ENCODE measurements at regions of chr12 and their contacts with region 1.

Region 1: GRCh38 chr12:48350249-48351021 is at the start of gene ZNF641:
- DNase-seq: peak; percentile 73
- H3K4me3 Mint-ChIP-seq: peak within 1 kb of the TSS; percentile 84
- H3K27ac Mint-ChIP-seq: peak within 1 kb of the TSS; percentile 78
- H3K4me1 Mint-ChIP-seq: peaks cover 9% of the 10 kb centered on the region
- H3K27me3 Mint-ChIP-seq: no peaks in the 10 kb centered on the region
- CTCF ChIP-seq: no peak
- total RNA-seq, gene ZNF641: 9.0 and 9.3 TPM in 2 replicates

Region 2: GRCh38 chr12:47920913-47921312 is 429.5 kb before region 1 on chr12:
- CTCF ChIA-PET with region 1: no interaction called
- intact Hi-C with region 1: no loop called
- DNase-seq: no peak
- H3K4me3 Mint-ChIP-seq: no peak overlapping the region
- H3K27ac Mint-ChIP-seq: no peak overlapping the region
- H3K4me1 Mint-ChIP-seq: no peaks in the 10 kb centered on the region
- H3K27me3 Mint-ChIP-seq: peaks cover 16% of the 10 kb centered on the region
- CTCF ChIP-seq: no peak

Region 3: GRCh38 chr12:48197971-48198671 is 152.3 kb before region 1 on chr12:
- CTCF ChIA-PET with region 1: no interaction called
- intact Hi-C with region 1: loop called (anchors 10 kb)
- DNase-seq: peak; percentile 87
- H3K4me3 Mint-ChIP-seq: peak overlapping the region; percentile 73
- H3K27ac Mint-ChIP-seq: peak overlapping the region; percentile 74
- H3K4me1 Mint-ChIP-seq: peaks cover 33% of the 10 kb centered on the region
- H3K27me3 Mint-ChIP-seq: no peaks in the 10 kb centered on the region
- CTCF ChIP-seq: no peak

Measured in Calu3 (cell line).